ENCODE measurements at regions of chr1 and their contacts with region 1.

Region 1: DNA sequence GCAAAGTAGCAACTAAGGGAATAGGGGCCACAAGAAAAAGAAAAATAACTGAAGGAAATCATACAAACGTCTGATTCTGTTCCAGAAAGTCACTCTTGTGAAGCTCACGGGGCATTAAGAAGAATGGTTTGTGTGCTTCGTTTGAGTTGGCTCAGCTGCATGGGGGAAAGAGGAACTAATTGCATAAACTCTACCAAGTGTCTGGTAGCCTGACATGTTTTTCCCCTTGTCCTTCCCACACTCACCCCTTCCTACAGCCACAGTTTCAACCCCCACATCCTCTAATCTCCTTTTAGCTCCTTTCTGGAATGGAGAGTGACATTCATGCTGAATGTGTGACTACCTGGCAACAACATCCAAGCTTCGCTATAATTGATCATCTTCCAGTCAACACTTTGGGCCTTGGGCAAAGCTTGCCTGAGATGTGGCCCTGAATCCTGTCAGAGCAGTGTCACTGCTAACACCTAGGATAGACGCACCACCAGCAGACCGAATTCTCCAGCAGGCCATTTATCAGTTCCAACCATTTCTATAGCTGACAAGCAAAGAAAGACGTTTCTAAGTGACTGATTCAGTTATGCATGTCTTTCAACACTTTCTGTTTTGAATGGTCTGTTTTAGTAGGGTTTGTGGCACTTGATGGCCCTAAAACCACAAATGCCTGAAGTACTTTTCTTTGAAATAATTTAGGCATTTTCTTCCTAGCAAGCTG is 439.6 kb downstream of the TTLL7 start:
- DNase-seq: no peak
- H3K4me3 ChIP-seq: no peak overlapping the region
- H3K27ac ChIP-seq: no peak overlapping the region
- H3K4me1 ChIP-seq: no peaks in the 10 kb centered on the region
- H3K27me3 ChIP-seq: peaks cover 3% of the 10 kb centered on the region
- CTCF ChIP-seq: no peak

Region 2: GRCh38 chr1:83520797-83521196 is 38.5 kb before region 1 on chr1:
- CTCF ChIA-PET with region 1: no interaction called
- dilution Hi-C with region 1: loop called (anchors 5 kb)
- in situ Hi-C with region 1: no loop called
- intact Hi-C with region 1: no loop called
- DNase-seq: no peak
- H3K4me3 ChIP-seq: no peak overlapping the region
- H3K27ac ChIP-seq: no peak overlapping the region
- H3K4me1 ChIP-seq: no peaks in the 10 kb centered on the region
- H3K27me3 ChIP-seq: no peaks in the 10 kb centered on the region
- CTCF ChIP-seq: no peak

Measured in mammary epithelial cell (primary cell).